Aorta (tissue), 5 donors: ENCODE measurements at regions of chr13 and their contacts with region 1.

Region 1: GRCh38 chr13:26186118-26186870 is 35.8 kb downstream of the RNF6 start:
- DNase-seq: peak; percentile 91 to 95
- ATAC-seq: peak; percentile 96
- H3K4me3 ChIP-seq: peak overlapping the region; percentile 4 to 29
- H3K27ac ChIP-seq: peak overlapping the region in 1 of 2 donors; percentile 47
- H3K4me1 ChIP-seq: no peaks in the 10 kb centered on the region
- H3K27me3 ChIP-seq: no peaks in the 10 kb centered on the region

Region 2: DNA sequence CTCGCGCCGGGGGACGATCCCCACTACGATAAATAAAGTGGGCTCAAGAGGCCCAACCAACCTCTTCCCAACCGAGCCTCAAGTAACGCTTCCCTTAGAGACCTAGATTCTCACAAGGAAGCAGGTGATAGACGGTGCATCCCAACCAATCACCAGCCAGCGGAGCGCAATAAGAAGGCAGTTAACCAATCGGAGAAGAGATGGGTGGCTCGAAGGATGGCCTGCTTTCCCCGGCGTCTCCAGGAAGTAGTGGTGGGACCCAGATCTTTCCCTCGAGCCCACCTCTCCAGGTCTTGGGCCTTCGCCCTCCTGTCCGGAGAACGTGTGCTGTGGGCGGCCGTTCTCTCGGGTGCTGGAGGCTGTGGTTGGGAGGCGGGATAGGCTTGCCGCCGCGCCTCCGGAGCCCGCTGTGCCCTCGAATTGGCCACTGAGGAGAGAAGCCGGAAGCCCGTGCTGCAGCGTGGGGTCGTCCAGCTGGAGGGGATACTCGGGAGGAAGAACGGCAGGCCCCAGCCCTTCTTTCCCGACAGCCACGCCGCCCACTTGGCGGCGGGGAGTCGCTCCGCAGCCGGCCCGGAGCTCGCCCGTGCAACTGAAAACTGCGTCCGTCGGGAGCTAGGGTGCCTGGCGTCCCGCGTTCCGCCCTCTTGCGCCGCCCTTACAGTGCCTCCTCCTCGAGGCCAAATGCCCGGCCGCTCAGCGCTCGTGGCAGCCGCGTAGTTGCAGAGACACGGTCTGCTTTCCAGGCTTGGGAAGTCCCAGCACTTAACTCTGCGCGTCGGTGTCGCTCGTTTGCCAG is 35.6 kb after region 1 on chr13 and contains the start of gene RNF6:
- intact Hi-C with region 1: loop called in 1 of 2 experiments (anchors 1 kb)
- DNase-seq: peak; percentile 96
- ATAC-seq: peak; percentile 100
- H3K4me3 ChIP-seq: peak within 1 kb of the TSS; percentile 83 to 96
- H3K27ac ChIP-seq: peak within 1 kb of the TSS; percentile 95
- H3K4me1 ChIP-seq: peaks cover 0 to 3% of the 10 kb centered on the region in 2 donors
- H3K27me3 ChIP-seq: no peaks in the 10 kb centered on the region
- total RNA-seq, gene RNF6: 23.2 to 28.9 TPM

Region 3: GRCh38 chr13:26253787-26254582 is 67.7 kb after region 1 on chr13 and contains the start of gene CDK8:
- intact Hi-C with region 1: loop called in 1 of 2 experiments (anchors 10 kb)
- DNase-seq: peak; percentile 94 to 97
- ATAC-seq: peak; percentile 98
- H3K4me3 ChIP-seq: peak within 1 kb of the TSS; percentile 93 to 97
- H3K27ac ChIP-seq: peak within 1 kb of the TSS; percentile 49 to 79
- H3K4me1 ChIP-seq: no peaks in the 10 kb centered on the region
- H3K27me3 ChIP-seq: no peaks in the 10 kb centered on the region
- total RNA-seq, gene CDK8: 10.5 to 10.6 TPM

Region 4: GRCh38 chr13:26498656-26499591 is 312.6 kb after region 1 on chr13:
- intact Hi-C with region 1: loop called (anchors 2 kb)
- DNase-seq: no peak
- ATAC-seq: no peak
- H3K4me3 ChIP-seq: no peak overlapping the region
- H3K27ac ChIP-seq: no peak overlapping the region
- H3K4me1 ChIP-seq: no peaks in the 10 kb centered on the region
- H3K27me3 ChIP-seq: no peaks in the 10 kb centered on the region

Region 5: GRCh38 chr13:26698392-26699196 is 512.3 kb after region 1 on chr13:
- intact Hi-C with region 1: loop called (anchors 5 kb)
- DNase-seq: peak; percentile 85 to 95
- ATAC-seq: peak; percentile 90
- H3K4me3 ChIP-seq: no peak overlapping the region
- H3K27ac ChIP-seq: no peak overlapping the region
- H3K4me1 ChIP-seq: no peaks in the 10 kb centered on the region
- H3K27me3 ChIP-seq: no peaks in the 10 kb centered on the region